ENCODE measurements at regions of chr14 and their contacts with region 1.

Region 1: DNA sequence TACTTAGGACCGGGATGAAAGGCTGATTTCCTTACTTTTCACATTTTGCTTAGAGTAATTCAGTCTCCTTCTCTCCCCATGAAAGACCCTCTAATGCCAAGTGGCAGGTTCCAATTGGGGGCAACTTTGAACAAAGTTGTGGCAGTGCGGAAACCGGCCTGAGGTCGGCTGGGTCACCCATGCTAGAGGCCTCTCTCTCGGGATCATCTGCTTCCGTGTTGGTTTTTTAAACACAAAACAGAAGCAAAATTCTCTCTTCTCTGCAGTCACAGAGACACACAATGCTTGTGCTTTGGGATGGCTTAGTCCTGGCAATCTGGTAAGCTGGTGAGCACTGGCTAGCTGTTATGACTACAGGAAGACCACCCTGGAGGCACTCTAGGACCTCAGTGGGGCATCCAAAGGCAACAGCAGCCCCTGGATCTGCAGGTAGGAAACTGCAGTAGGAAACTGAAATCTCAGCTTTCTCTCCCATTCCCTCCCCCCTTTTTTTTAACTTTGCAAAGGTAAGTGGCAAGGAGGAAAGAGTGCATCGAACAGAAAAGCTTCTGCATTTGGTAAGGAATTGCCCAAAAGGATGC is 102.1 kb downstream of the BCL11B start:
- DNase-seq: no peak
- H3K4me3 Mint-ChIP-seq: no peak overlapping the region
- H3K27ac Mint-ChIP-seq: no peak overlapping the region
- H3K4me1 Mint-ChIP-seq: no peaks in the 10 kb centered on the region
- H3K27me3 Mint-ChIP-seq: no peaks in the 10 kb centered on the region

Region 2: GRCh38 chr14:99077076-99077843 is 92.6 kb before region 1 on chr14:
- intact Hi-C with region 1: no loop called
- DNase-seq: no peak
- H3K4me3 Mint-ChIP-seq: no peak overlapping the region
- H3K27ac Mint-ChIP-seq: no peak overlapping the region
- H3K4me1 Mint-ChIP-seq: peaks cover 16% of the 10 kb centered on the region
- H3K27me3 Mint-ChIP-seq: peaks cover 2% of the 10 kb centered on the region

Region 3: GRCh38 chr14:99143793-99144192 is 26.1 kb before region 1 on chr14:
- intact Hi-C with region 1: loop called (anchors 2 kb)
- DNase-seq: no peak
- H3K4me3 Mint-ChIP-seq: no peak overlapping the region
- H3K27ac Mint-ChIP-seq: no peak overlapping the region
- H3K4me1 Mint-ChIP-seq: peaks cover 5% of the 10 kb centered on the region
- H3K27me3 Mint-ChIP-seq: peaks cover 2% of the 10 kb centered on the region